ENCODE measurements at regions of chr6 and their contacts with region 1.

Region 1: GRCh38 chr6:29388533-29388932 is 6.9 kb upstream of the OR12D2 start:
- DNase-seq: no peak
- H3K4me3 ChIP-seq: no peak overlapping the region
- H3K27ac ChIP-seq: no peak overlapping the region
- H3K4me1 ChIP-seq: no peaks in the 10 kb centered on the region
- H3K27me3 ChIP-seq: no peaks in the 10 kb centered on the region
- CTCF ChIP-seq: no peak

Region 2: GRCh38 chr6:29211488-29211887 is 177.0 kb before region 1 on chr6:
- dilution Hi-C with region 1: no loop called
- DNase-seq: no peak
- H3K4me3 ChIP-seq: no peak overlapping the region
- H3K27ac ChIP-seq: no peak overlapping the region
- H3K4me1 ChIP-seq: no peaks in the 10 kb centered on the region
- H3K27me3 ChIP-seq: no peaks in the 10 kb centered on the region
- CTCF ChIP-seq: no peak

Region 3: GRCh38 chr6:29516108-29516507 is 127.6 kb after region 1 on chr6:
- dilution Hi-C with region 1: no loop called
- DNase-seq: peak; percentile 35
- H3K4me3 ChIP-seq: no peak overlapping the region
- H3K27ac ChIP-seq: no peak overlapping the region
- H3K4me1 ChIP-seq: peaks cover 8% of the 10 kb centered on the region
- H3K27me3 ChIP-seq: no peaks in the 10 kb centered on the region
- CTCF ChIP-seq: no peak

Region 4: GRCh38 chr6:29589423-29590048 is 201.0 kb after region 1 on chr6:
- dilution Hi-C with region 1: loop called (anchors 10 kb)
- DNase-seq: peak; percentile 13
- H3K4me3 ChIP-seq: no peak overlapping the region
- H3K27ac ChIP-seq: no peak overlapping the region
- H3K4me1 ChIP-seq: no peaks in the 10 kb centered on the region
- H3K27me3 ChIP-seq: no peaks in the 10 kb centered on the region
- CTCF ChIP-seq: peak; percentile 87 to 97 (median 97)